ENCODE measurements at regions of chr17 and their contacts with region 1.

Region 1: DNA sequence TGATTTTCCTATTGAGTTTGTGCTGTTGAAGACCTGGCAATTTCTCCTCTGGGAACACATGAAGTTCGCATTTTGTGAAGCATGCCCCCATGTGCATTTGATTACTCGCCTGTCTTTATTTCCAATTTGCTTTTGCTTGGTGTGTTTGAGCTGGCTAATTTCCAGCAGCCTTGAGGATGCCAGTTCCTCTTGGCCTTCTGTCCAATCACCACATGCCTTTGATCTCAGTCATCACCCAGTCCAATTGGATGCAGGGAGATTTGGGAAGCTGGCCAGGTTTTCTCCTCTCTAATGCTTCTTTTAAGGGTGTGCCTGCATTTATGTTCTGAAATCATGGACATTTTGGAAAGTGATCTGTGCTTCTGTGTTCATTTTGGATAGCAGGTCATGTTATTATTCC is 3.8 kb upstream of the TMEM100 start:
- DNase-seq: peak in 1 of 2 donors; percentile 85
- H3K4me3 ChIP-seq: no peak overlapping the region
- H3K27ac ChIP-seq: peak overlapping the region in 1 of 2 donors; percentile 48
- H3K4me1 ChIP-seq: peaks cover 0 to 14% of the 10 kb centered on the region in 2 donors
- H3K27me3 ChIP-seq: no peaks in the 10 kb centered on the region
- CTCF ChIP-seq: no peak

Region 2: GRCh38 chr17:55285340-55286301 is 440.8 kb before region 1 on chr17:
- intact Hi-C with region 1: loop called (anchors 10 kb)
- DNase-seq: peak; percentile 66 to 96
- H3K4me3 ChIP-seq: peak overlapping the region; percentile 23 to 43
- H3K27ac ChIP-seq: peak overlapping the region; percentile 83 to 88
- H3K4me1 ChIP-seq: peaks cover 31 to 60% of the 10 kb centered on the region in 2 donors
- H3K27me3 ChIP-seq: no peaks in the 10 kb centered on the region
- CTCF ChIP-seq: no peak

Region 3: GRCh38 chr17:55660178-55660886 is 66.1 kb before region 1 on chr17:
- intact Hi-C with region 1: no loop called
- DNase-seq: no peak
- H3K4me3 ChIP-seq: no peak overlapping the region
- H3K27ac ChIP-seq: no peak overlapping the region
- H3K4me1 ChIP-seq: no peaks in the 10 kb centered on the region
- H3K27me3 ChIP-seq: no peaks in the 10 kb centered on the region
- CTCF ChIP-seq: no peak

Region 4: GRCh38 chr17:55750750-55751657 is 24.6 kb after region 1 on chr17 and contains the start of gene PCTP:
- intact Hi-C with region 1: loop called (anchors 2 kb)
- DNase-seq: peak; percentile 83 to 98
- H3K4me3 ChIP-seq: peak within 1 kb of the TSS; percentile 88 to 94
- H3K27ac ChIP-seq: peak within 1 kb of the TSS; percentile 78 to 80
- H3K4me1 ChIP-seq: peaks cover 0 to 6% of the 10 kb centered on the region in 2 donors
- H3K27me3 ChIP-seq: no peaks in the 10 kb centered on the region
- CTCF ChIP-seq: peak in 2 of 3 experiments; percentile 35 to 39
- total RNA-seq, gene PCTP: 17.8 TPM

Region 5: GRCh38 chr17:56833809-56834379 is 1107.5 kb after region 1 on chr17 and contains the starts of genes C17orf67 and DGKE:
- intact Hi-C with region 1: loop called (anchors 10 kb)
- DNase-seq: peak; percentile 93 to 98
- H3K4me3 ChIP-seq: peak within 1 kb of the TSS; percentile 71 to 91
- H3K27ac ChIP-seq: peak within 1 kb of the TSS; percentile 80 to 82
- H3K4me1 ChIP-seq: peaks cover 0 to 16% of the 10 kb centered on the region in 2 donors
- H3K27me3 ChIP-seq: no peaks in the 10 kb centered on the region
- CTCF ChIP-seq: no peak
- total RNA-seq, gene C17orf67: 10.1 TPM
- total RNA-seq, gene DGKE: 85.0 TPM